ENCODE measurements at regions of chrX and their contacts with region 1.

Region 1: DNA sequence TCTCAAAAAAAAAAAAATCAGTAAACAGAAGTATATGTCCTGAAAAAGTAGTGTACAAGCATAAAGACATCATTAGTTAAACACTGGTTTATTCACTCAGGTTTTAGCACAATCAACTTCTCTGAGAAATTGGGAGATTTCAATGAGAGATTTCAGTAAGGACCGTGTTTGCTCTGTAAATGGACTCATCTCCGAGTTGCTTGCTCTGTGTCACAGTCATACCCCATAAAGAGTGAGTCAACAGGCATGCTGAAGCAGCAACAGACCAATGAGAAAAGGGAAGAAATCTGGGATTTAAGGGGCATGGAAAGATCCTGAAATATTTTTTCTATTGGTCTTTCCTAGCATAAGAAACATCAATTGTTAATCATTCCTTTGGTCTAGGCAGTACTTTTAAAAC is 4.7 kb downstream of the GLUD2 start:
- DNase-seq: peak; percentile 77
- ATAC-seq: peak; percentile 91
- H3K4me3 ChIP-seq: no peak overlapping the region
- H3K27ac ChIP-seq: peak overlapping the region; percentile 50; the same call in 1 of the 2 replicates
- H3K4me1 ChIP-seq: peaks cover 5% of the 10 kb centered on the region
- H3K27me3 ChIP-seq: no peaks in the 10 kb centered on the region
- CTCF ChIP-seq: no peak

Region 2: DNA sequence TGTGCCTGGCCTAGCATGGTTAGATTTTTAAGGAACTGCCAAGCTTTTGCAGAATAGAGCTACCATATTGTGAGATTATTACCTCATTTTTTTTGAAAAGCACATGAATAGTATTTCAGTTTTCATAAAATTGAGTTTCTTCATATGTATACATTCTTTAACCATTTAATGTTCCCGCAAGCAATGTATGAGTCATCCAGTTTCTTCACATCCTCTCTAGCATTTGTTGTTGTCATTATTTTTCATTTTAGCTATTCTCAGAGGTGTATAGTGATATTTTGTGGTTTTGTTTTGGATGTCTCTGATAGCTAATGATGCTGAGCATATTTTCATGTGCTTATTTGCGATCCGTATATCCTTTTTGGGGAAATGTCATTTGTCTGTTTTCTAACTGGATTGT is 70.2 kb after region 1 on chrX:
- CTCF ChIA-PET with region 1: no interaction called
- POLR2A ChIA-PET with region 1: no interaction called
- intact Hi-C with region 1: loop called (anchors 5 kb)
- DNase-seq: peak; percentile 33
- ATAC-seq: no peak
- H3K4me3 ChIP-seq: no peak overlapping the region
- H3K27ac ChIP-seq: peak overlapping the region; percentile 100
- H3K4me1 ChIP-seq: peaks cover 17% of the 10 kb centered on the region
- H3K27me3 ChIP-seq: no peaks in the 10 kb centered on the region
- CTCF ChIP-seq: no peak

Measured in PC-3 (cell line).